T-cell (primary cell): ENCODE measurements at regions of chr5 and their contacts with region 1.

Region 1: GRCh38 chr5:61408476-61409168 is 76.6 kb downstream of the ZSWIM6 start:
- DNase-seq: peak; percentile 82 to 99 (median 98)
- ATAC-seq: peak; percentile 97 to 99 (median 98)
- H3K4me3 ChIP-seq: peak overlapping the region; percentile 35 to 39
- H3K4me3 Mint-ChIP-seq: peak overlapping the region; percentile 61 to 80 (median 73)
- H3K27ac ChIP-seq: peak overlapping the region; percentile 59
- H3K27ac Mint-ChIP-seq: peak overlapping the region; percentile 73 to 81
- H3K4me1 ChIP-seq: peaks cover 3 to 12% of the 10 kb centered on the region in 2 experiments
- H3K4me1 Mint-ChIP-seq: peaks cover 32 to 39% (median 38%) of the 10 kb centered on the region in 3 donors
- H3K27me3 ChIP-seq: no peaks in the 10 kb centered on the region
- H3K27me3 Mint-ChIP-seq: no peaks in the 10 kb centered on the region

Region 2: GRCh38 chr5:61277190-61277589 is 131.4 kb before region 1 on chr5:
- CTCF ChIA-PET with region 1: no interaction called
- POLR2A ChIA-PET with region 1: interaction called in 1 of 2 experiments, 14 read pairs
- DNase-seq: peak in 1 of 35 experiments; percentile 31
- ATAC-seq: peak; percentile 36 to 60 (median 40)
- H3K4me3 ChIP-seq: no peak overlapping the region
- H3K4me3 Mint-ChIP-seq: peak overlapping the region; percentile 11 to 59 (median 42)
- H3K27ac ChIP-seq: no peak overlapping the region
- H3K27ac Mint-ChIP-seq: peak overlapping the region; percentile 60 to 82
- H3K4me1 ChIP-seq: peaks cover 2 to 5% of the 10 kb centered on the region in 2 experiments
- H3K4me1 Mint-ChIP-seq: peaks cover 31 to 33% (median 32%) of the 10 kb centered on the region in 3 donors
- H3K27me3 ChIP-seq: no peaks in the 10 kb centered on the region
- H3K27me3 Mint-ChIP-seq: no peaks in the 10 kb centered on the region

Region 3: DNA sequence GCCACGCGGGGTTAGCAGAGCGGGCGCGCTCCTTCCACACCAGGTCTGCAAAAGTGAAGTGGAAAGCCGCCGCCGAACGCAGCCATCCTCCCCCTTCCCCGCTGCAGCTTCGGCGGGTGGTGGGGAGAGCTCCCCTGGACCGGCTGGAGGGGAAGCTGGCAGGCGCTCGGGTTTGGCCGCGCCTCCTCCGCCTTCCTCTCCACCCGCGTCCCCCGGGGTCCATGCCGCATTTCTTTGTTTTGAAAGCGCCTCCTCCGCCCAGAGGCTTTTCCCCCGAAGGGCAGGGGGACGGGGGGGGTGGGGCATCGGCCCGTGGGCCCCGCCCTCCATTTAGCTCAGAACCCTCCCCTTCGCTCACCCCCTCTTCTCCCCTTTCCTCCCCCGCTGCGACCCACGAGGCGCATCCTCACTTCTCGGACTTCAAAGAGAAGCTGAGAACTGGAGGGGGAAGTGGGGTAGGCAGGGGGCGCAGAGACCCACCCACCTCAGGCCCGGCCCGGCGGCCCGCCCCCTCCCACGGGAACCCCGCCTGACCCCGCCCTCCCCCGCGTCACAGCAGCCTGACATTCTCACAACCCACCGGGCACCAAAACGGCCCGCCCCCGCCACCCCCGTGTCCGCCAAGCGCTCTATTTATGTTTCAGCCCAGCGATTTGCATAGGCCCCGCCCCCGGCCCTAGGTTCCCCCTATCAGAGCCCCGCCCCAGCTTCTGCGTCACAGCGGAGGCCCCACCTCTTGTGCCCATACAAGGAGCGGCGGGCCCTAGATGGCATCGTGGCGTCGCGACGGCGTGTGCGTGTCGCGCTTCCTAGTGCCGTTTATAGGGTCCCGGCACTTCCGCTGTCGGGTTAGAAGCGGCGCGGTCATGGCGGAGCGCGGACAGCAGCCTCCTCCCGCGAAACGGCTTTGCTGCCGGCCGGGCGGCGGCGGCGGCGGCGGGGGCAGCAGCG is 76.9 kb before region 1 on chr5 and contains the start of gene ZSWIM6:
- CTCF ChIA-PET with region 1: interaction called in 1 of 2 experiments, 16 read pairs
- POLR2A ChIA-PET with region 1: interaction called in 1 of 2 experiments, 23 read pairs
- DNase-seq: peak; percentile 96 to 100 (median 99)
- ATAC-seq: peak; percentile 79 to 84 (median 82)
- H3K4me3 ChIP-seq: peak within 1 kb of the TSS; percentile 83 to 97
- H3K4me3 Mint-ChIP-seq: peak within 1 kb of the TSS; percentile 89 to 95 (median 95)
- H3K27ac ChIP-seq: peak within 1 kb of the TSS; percentile 69
- H3K27ac Mint-ChIP-seq: peak within 1 kb of the TSS; percentile 91
- H3K4me1 ChIP-seq: peaks cover 6 to 28% of the 10 kb centered on the region in 2 experiments
- H3K4me1 Mint-ChIP-seq: peaks cover 43 to 50% (median 48%) of the 10 kb centered on the region in 3 donors
- H3K27me3 ChIP-seq: peaks cover 0 to 11% of the 10 kb centered on the region in 2 experiments
- H3K27me3 Mint-ChIP-seq: peaks cover 5 to 22% of the 10 kb centered on the region in 2 donors
- total RNA-seq, gene ZSWIM6: 8.3 to 11.3 (median 10.1) TPM

Region 4: DNA sequence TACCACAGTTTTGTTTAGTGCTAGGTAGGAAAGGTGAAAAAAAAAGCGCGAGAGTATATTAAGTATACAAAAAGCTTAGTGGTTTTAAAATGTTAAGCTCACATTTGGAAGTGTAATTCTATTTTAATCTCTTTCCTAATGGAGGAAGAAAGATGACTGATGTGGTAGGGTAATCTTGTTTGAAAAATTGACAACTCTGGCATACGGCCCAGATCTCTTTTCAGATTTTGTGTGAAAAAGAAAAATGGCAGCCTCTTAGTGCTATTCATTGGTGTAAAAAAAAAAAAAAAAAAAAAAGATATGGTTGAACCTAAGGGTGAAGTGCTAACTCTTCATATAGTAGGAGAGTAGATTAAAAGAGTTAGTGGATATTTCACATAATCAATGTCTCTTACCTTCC is 31.5 kb after region 1 on chr5:
- CTCF ChIA-PET with region 1: interaction called in 1 of 2 experiments, 11 read pairs
- POLR2A ChIA-PET with region 1: no interaction called
- DNase-seq: no peak
- ATAC-seq: no peak
- H3K4me3 ChIP-seq: no peak overlapping the region
- H3K4me3 Mint-ChIP-seq: no peak overlapping the region
- H3K27ac ChIP-seq: no peak overlapping the region
- H3K27ac Mint-ChIP-seq: no peak overlapping the region
- H3K4me1 ChIP-seq: no peaks in the 10 kb centered on the region
- H3K4me1 Mint-ChIP-seq: peaks cover 4 to 13% (median 5%) of the 10 kb centered on the region in 3 donors
- H3K27me3 ChIP-seq: no peaks in the 10 kb centered on the region
- H3K27me3 Mint-ChIP-seq: no peaks in the 10 kb centered on the region

Region 5: GRCh38 chr5:61461423-61461822 is 52.8 kb after region 1 on chr5:
- CTCF ChIA-PET with region 1: no interaction called
- POLR2A ChIA-PET with region 1: no interaction called
- DNase-seq: no peak
- ATAC-seq: no peak
- H3K4me3 ChIP-seq: no peak overlapping the region
- H3K4me3 Mint-ChIP-seq: no peak overlapping the region
- H3K27ac ChIP-seq: no peak overlapping the region
- H3K27ac Mint-ChIP-seq: no peak overlapping the region
- H3K4me1 ChIP-seq: no peaks in the 10 kb centered on the region
- H3K4me1 Mint-ChIP-seq: peaks cover 24 to 49% (median 42%) of the 10 kb centered on the region in 3 donors
- H3K27me3 ChIP-seq: no peaks in the 10 kb centered on the region
- H3K27me3 Mint-ChIP-seq: no peaks in the 10 kb centered on the region